ENCODE measurements at regions of chr22 and their contacts with region 1.

Region 1: DNA sequence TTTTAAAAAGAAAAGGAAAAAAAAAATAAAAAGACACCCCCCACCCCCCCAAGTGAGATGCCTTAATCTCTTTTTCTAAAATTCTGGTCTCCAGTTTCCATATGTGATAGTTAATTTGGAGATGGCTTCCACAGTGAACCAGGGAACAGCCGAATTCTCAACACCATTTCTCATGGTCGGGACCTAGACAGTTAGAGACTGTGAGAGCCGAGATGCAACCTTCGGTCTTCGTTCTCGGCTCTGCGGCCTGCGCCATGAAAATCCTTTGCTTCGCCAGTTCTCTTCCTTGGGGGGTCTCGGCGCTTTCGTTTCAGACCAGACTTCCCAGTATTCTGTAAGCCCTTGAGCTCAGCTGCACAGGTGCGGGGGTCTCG is 723 bp downstream of the CACNG2 start:
- DNase-seq: no peak
- H3K4me3 Mint-ChIP-seq: no peak overlapping the region
- H3K27ac Mint-ChIP-seq: no peak overlapping the region
- H3K4me1 Mint-ChIP-seq: peaks cover 3% of the 10 kb centered on the region
- H3K27me3 Mint-ChIP-seq: peaks cover 48% of the 10 kb centered on the region
- CTCF ChIP-seq: no peak

Region 2: GRCh38 chr22:36644333-36644757 is 58.5 kb before region 1 on chr22:
- CTCF ChIA-PET with region 1: no interaction called
- intact Hi-C with region 1: loop called (anchors 5 kb)
- DNase-seq: peak; percentile 68
- H3K4me3 Mint-ChIP-seq: no peak overlapping the region
- H3K27ac Mint-ChIP-seq: no peak overlapping the region
- H3K4me1 Mint-ChIP-seq: no peaks in the 10 kb centered on the region
- H3K27me3 Mint-ChIP-seq: peaks cover 76% of the 10 kb centered on the region
- CTCF ChIP-seq: no peak

Region 3: DNA sequence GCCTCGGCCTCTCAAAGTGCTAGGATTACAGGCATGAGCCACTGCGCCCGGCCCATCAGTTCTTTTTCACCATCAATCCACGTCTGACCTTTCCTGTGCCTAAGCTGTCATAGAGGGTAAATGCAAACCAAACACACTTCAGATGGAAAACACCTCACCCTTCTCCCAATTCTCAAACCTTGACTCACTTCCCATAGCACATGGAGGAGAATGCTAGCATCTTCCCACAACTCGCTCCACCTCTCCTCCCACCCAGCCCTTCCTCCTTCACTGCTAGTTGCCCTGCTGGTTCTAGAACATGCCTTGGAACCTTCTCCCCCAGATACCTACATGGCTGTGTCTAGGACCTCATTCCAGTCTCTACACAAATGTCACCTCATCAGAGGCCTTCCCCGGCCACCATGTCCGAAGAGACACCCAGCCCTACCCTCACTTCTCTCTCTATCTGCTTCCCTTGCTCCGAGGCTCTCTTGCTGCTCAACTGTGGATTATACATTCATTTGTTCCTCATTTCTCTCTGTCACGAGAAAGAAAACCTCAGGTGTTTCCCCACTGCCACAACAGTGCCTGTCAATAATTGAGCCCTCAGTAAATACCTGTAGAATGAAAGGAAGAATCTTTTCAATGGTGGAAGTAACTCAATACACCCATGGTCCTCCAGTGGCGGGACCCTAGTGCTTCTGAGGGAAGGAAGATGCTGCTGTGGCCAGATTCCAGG is 136.7 kb after region 1 on chr22:
- CTCF ChIA-PET with region 1: no interaction called
- intact Hi-C with region 1: no loop called
- DNase-seq: no peak
- H3K4me3 Mint-ChIP-seq: no peak overlapping the region
- H3K27ac Mint-ChIP-seq: no peak overlapping the region
- H3K4me1 Mint-ChIP-seq: peaks cover 8% of the 10 kb centered on the region
- H3K27me3 Mint-ChIP-seq: peaks cover 73% of the 10 kb centered on the region
- CTCF ChIP-seq: no peak

Region 4: DNA sequence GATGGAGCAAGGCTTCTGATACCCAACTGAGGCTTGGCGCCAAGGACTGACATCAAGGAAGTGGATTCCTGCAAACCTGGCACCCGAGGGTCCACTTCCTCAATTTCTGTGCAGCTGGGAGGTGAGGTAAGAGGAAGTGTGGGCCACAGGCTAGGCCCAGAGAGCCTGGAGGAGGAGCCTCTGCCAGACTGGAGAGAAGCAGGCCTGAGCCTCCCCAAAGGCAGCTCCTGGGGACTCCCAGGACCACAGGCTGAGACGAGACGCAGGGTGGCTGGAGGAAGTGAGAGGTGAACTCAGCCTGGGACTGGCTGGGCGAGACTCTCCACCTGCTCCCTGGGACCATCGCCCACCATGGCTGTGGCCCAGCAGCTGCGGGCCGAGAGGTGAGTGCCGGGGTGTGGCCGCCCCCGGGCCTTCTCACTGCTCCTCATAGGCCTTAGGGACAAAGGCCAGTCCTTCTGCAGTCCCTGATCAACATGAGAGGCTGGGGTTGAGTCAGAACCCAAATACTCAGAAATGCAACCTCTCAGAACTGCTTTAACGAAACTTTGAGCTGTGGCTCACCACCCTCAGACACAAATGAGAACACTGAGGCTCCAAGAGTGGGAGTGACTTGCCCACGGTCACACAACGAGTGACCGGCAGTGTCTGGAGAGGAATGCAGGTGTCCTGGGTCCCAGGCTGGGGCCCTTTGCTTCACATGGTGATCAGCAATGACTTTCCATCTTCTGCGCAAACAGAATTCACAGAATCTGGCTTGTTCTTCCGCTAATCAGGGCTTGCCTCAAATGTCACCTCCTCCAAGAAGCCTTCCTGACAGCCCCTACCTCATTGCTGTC is 158.2 kb after region 1 on chr22 and contains the start of gene NCF4:
- CTCF ChIA-PET with region 1: no interaction called
- intact Hi-C with region 1: no loop called
- DNase-seq: no peak
- H3K4me3 Mint-ChIP-seq: no peak within 1 kb of the TSS
- H3K27ac Mint-ChIP-seq: no peak within 1 kb of the TSS
- H3K4me1 Mint-ChIP-seq: peaks cover 8% of the 10 kb centered on the region
- H3K27me3 Mint-ChIP-seq: peaks cover 50% of the 10 kb centered on the region
- CTCF ChIP-seq: no peak
- total RNA-seq, gene NCF4: 0.54 TPM in 1 of 2 replicates, not detected in the other

Measured in Calu3 (cell line).